Calu3 (cell line): ENCODE measurements at regions of chr21 and their contacts with region 1.

Region 1: DNA sequence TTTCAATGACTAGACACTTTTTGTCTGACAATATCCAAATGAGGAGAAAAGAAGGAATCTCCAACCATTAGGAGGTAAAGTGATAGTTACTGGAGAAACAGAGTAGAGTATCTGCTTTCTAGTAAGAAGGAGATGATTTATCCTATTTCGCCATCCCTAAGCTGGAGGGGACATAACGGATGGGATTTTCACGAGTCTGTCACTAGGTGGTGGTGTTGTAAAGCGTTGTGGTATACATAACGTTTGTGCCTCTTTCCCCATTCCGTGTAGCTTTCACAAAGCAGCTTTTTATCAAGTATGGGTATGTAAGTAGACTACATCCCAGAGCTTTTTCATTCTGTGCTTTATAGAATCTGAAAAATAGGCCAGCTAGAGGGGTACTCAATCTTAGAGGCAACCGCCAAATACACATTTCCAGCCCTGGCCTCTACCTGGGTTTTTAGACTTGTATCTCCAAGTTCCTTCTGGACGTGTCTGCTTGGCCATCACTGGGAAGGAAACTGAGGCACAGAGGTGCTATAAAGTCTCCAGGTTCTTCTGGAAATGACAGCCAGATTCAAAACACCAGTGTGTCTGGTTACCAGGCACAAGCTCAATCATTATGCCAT is 33.3 kb upstream of the FAM3B start:
- DNase-seq: peak; percentile 56
- H3K4me3 Mint-ChIP-seq: no peak overlapping the region
- H3K27ac Mint-ChIP-seq: no peak overlapping the region
- H3K4me1 Mint-ChIP-seq: no peaks in the 10 kb centered on the region
- H3K27me3 Mint-ChIP-seq: no peaks in the 10 kb centered on the region
- CTCF ChIP-seq: peak; percentile 42

Region 2: DNA sequence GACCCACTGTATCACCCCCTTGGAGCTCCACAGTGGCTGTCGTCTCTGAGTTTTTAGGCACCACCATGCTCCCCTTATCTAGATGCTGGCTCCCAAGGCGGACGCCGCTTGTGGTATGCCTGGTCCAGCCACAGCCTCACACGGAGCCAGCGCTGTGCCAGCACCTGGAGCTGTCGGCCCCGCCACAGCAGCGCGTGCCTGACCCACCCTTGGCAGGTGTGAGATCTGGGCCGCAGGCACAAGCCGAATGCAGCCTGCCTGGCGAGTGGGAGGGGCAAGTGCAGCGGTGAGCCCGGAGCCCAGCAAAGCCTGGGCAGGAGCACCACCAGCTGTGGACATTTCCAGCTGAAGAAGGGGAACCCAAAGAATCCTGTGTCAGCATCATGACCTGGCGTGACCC is 207.3 kb before region 1 on chr21:
- CTCF ChIA-PET with region 1: no interaction called
- intact Hi-C with region 1: no loop called
- DNase-seq: no peak
- H3K4me3 Mint-ChIP-seq: no peak overlapping the region
- H3K27ac Mint-ChIP-seq: no peak overlapping the region
- H3K4me1 Mint-ChIP-seq: no peaks in the 10 kb centered on the region
- H3K27me3 Mint-ChIP-seq: peaks cover 32% of the 10 kb centered on the region
- CTCF ChIP-seq: no peak

Region 3: DNA sequence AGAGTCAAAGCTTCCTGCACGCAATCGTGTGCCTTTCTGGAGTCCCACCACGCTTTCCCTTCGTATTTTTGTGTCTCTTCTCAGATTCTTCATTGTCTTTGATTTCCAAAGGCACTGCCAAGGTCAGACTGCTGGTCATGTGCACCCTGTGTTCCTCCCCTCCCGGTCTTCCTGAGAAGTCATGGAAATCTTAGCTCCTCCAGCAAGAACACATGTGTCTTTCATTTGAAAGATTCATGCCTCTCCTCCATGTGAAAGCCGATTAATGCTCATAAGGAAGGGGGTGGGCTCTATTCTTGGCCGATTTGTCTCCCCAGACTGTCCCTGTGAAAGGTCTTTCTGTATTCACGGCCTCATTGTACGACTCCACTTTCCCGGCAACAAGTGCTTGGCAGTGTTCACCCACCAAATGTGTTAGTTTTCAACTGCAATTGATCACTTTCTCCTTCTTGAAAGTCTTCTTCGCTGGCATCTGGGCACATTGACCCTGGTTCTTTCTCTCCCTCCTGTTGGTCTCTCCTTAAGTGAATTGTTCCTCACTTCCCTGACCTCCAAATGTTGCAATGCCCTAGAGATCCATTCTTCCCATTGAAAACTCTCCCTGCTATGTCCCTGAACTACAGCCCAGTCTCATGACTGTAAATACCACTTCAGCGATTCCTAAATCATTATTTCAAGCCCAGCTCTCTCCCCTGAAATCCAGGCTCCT is 103.9 kb after region 1 on chr21:
- CTCF ChIA-PET with region 1: no interaction called
- intact Hi-C with region 1: no loop called
- DNase-seq: no peak
- H3K4me3 Mint-ChIP-seq: no peak overlapping the region
- H3K27ac Mint-ChIP-seq: no peak overlapping the region
- H3K4me1 Mint-ChIP-seq: no peaks in the 10 kb centered on the region
- H3K27me3 Mint-ChIP-seq: peaks cover 29% of the 10 kb centered on the region
- CTCF ChIP-seq: no peak

Region 4: GRCh38 chr21:41411449-41412089 is 128.3 kb after region 1 on chr21:
- CTCF ChIA-PET with region 1: interaction called, 10 read pairs
- intact Hi-C with region 1: no loop called
- DNase-seq: peak; percentile 24
- H3K4me3 Mint-ChIP-seq: no peak overlapping the region
- H3K27ac Mint-ChIP-seq: no peak overlapping the region
- H3K4me1 Mint-ChIP-seq: no peaks in the 10 kb centered on the region
- H3K27me3 Mint-ChIP-seq: peaks cover 28% of the 10 kb centered on the region
- CTCF ChIP-seq: no peak

Region 5: GRCh38 chr21:41460578-41461527 is 177.5 kb after region 1 on chr21:
- CTCF ChIA-PET with region 1: interaction called, 17 read pairs
- intact Hi-C with region 1: loop called (anchors 5 kb)
- DNase-seq: peak; percentile 69
- H3K4me3 Mint-ChIP-seq: no peak overlapping the region
- H3K27ac Mint-ChIP-seq: no peak overlapping the region
- H3K4me1 Mint-ChIP-seq: peaks cover 13% of the 10 kb centered on the region
- H3K27me3 Mint-ChIP-seq: no peaks in the 10 kb centered on the region
- CTCF ChIP-seq: peak; percentile 65